Caco-2 (cell line): ENCODE measurements at regions of chr5 and their contacts with region 1.

Region 1: DNA sequence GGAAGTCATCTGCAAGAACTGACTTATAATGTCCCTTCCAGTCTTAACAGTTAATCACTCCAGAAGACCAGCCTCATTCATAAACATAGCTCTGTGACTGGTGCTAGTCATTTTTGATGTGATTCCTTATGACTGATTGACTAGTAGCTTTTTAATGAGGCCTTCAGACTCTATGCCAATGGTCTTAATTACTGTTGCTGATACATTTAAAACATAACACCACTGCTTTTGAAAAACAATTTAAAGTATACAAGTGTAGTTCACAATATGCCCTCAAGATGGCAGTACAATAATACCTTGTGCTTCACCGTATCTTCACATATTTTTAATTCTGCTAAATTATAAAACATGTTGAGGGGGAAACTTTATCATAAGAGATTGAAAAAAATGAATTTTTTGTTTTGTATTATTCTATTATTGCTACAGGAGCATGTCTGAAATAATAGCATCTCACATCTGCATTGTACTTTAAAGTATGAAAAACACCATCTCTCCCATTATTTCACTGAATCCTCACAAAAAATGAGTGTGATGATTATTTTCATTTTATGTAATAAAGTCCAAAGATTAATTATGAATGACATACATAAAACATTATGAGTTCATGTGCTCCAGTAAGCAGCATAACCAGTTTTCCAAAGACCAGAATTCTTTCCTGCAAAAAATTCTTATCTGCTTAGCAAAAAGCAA is 55.2 kb upstream of the SHISAL2B start:
- DNase-seq: peak in 1 of 2 experiments; percentile 21
- H3K4me3 ChIP-seq: no peak overlapping the region
- H3K4me3 Mint-ChIP-seq: no peak overlapping the region
- H3K27ac Mint-ChIP-seq: no peak overlapping the region
- H3K4me1 ChIP-seq: no peaks in the 10 kb centered on the region
- H3K4me1 Mint-ChIP-seq: no peaks in the 10 kb centered on the region
- H3K27me3 ChIP-seq: no peaks in the 10 kb centered on the region
- H3K27me3 Mint-ChIP-seq: peaks cover 9% of the 10 kb centered on the region
- CTCF ChIP-seq: peak; percentile 48 to 88

Region 2: GRCh38 chr5:64680289-64680688 is 45.1 kb after region 1 on chr5:
- CTCF ChIA-PET with region 1: no interaction called
- POLR2A ChIA-PET with region 1: no interaction called
- intact Hi-C with region 1: loop called (anchors 1 kb)
- DNase-seq: peak; percentile 44 to 50
- H3K4me3 ChIP-seq: no peak overlapping the region
- H3K4me3 Mint-ChIP-seq: no peak overlapping the region
- H3K27ac Mint-ChIP-seq: no peak overlapping the region
- H3K4me1 ChIP-seq: no peaks in the 10 kb centered on the region
- H3K4me1 Mint-ChIP-seq: peaks cover 4% of the 10 kb centered on the region
- H3K27me3 ChIP-seq: no peaks in the 10 kb centered on the region; the same call in 1 of the 2 replicates
- H3K27me3 Mint-ChIP-seq: peaks cover 3% of the 10 kb centered on the region
- CTCF ChIP-seq: peak; percentile 40 to 60